Mammary epithelial cell (primary cell): ENCODE measurements at regions of chr3 and their contacts with region 1.

Region 1: GRCh38 chr3:65439641-65440284 is 599.0 kb downstream of the MAGI1 start:
- DNase-seq: peak; percentile 39
- H3K4me3 ChIP-seq: no peak overlapping the region
- H3K27ac ChIP-seq: no peak overlapping the region
- H3K4me1 ChIP-seq: no peaks in the 10 kb centered on the region
- H3K27me3 ChIP-seq: no peaks in the 10 kb centered on the region
- CTCF ChIP-seq: peak; percentile 46 to 76

Region 2: GRCh38 chr3:65342084-65342683 is 97.6 kb before region 1 on chr3:
- CTCF ChIA-PET with region 1: no interaction called
- dilution Hi-C with region 1: no loop called
- in situ Hi-C with region 1: no loop called
- intact Hi-C with region 1: loop called (anchors 1 kb)
- DNase-seq: peak; percentile 13
- H3K4me3 ChIP-seq: no peak overlapping the region
- H3K27ac ChIP-seq: no peak overlapping the region
- H3K4me1 ChIP-seq: no peaks in the 10 kb centered on the region
- H3K27me3 ChIP-seq: no peaks in the 10 kb centered on the region
- CTCF ChIP-seq: peak; percentile 76 to 81

Region 3: DNA sequence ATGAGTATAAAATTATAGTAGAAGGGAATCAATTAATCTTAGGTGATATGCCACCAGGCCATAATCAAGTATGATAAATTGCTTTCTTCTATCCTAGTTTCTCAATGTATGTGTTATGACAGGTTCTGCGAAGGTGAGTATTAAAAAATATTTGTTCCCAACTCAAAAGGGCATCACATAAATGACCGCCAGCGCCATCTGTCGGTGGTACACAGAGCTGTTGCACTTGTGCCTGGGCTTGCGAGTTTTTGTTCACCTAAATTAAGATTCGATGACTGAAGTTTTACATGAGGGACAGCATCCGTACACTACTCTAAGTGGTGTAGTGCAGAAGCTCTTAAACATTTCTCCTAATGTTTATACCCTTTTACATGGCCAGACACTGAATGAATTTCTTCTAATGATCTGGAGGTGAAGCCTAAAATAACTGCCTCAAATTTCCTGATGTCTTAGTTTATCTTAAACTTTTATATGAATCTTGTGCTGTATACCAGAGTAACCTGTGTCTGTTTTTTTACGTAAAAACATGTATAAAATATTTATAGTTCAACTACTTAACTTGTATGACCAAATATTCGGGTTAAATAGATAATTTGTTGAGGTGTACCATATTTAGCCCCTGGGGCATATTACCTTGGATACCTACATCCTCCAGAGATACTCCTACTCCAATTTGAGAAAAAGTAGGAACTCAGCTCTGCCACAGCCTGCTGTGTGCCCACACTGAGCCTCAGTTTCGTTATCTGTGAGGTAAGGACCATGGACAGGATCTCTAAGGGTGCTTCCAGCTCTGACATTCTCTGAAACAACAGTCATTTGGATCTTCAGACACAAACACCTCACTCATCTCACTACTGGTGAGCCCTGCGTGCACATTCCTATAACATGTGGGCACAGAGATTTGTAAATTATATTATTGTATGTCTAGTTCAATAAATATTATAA is 233.4 kb after region 1 on chr3:
- CTCF ChIA-PET with region 1: interaction called, 18 read pairs
- dilution Hi-C with region 1: no loop called
- in situ Hi-C with region 1: loop called in 1 of 2 experiments (anchors 25 kb)
- intact Hi-C with region 1: loop called (anchors 1 kb)
- DNase-seq: peak; percentile 30
- H3K4me3 ChIP-seq: no peak overlapping the region
- H3K27ac ChIP-seq: no peak overlapping the region
- H3K4me1 ChIP-seq: peaks cover 6% of the 10 kb centered on the region
- H3K27me3 ChIP-seq: no peaks in the 10 kb centered on the region
- CTCF ChIP-seq: peak; percentile 83 to 84

Region 4: DNA sequence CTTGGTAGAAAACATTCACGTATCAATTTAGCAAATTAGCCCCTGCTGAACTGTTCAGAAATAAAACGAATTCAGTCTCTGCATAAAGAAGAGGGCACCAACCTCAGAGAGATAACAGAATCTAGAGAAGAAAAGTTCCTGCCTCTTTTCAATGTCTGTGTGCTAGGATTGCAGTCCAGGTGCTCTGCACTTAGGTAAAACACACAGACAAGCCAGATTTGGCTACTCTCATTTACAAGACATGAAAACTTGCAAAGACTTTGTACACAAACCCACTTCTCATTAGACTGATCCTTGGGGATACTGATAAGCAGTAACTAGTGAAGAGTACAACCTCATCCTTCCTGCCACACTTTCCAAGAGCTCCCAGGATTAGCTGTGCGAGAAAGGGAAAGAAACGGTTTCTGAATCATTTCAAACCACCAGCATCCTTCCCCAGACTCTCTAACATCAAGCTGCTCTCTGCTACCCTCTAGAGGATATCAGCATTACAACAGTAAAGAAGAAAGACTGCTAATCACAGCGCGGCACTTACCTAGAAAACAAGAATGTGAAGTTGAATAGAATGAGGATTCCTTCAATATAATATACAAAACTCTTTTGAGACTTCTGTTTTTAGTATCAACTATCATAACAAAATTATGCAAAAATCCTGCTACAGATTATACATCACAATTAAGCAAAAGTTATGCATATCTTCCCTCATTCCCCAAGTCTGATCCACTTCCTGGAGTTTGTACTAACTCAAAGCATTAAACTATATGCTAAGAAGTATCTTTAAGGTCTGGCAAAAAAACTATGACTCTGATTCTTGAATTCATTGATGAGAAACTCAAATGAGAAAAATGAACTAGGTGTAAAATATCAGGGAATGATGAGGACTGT is 292.5 kb after region 1 on chr3:
- CTCF ChIA-PET with region 1: interaction called, 8 read pairs
- dilution Hi-C with region 1: no loop called
- in situ Hi-C with region 1: loop called (anchors 5 to 25 kb)
- intact Hi-C with region 1: loop called (anchors 1 kb)
- DNase-seq: peak; percentile 52
- H3K4me3 ChIP-seq: no peak overlapping the region
- H3K27ac ChIP-seq: no peak overlapping the region
- H3K4me1 ChIP-seq: no peaks in the 10 kb centered on the region
- H3K27me3 ChIP-seq: no peaks in the 10 kb centered on the region
- CTCF ChIP-seq: peak; percentile 82 to 88

Region 5: GRCh38 chr3:65751123-65751700 is 311.4 kb after region 1 on chr3:
- CTCF ChIA-PET with region 1: interaction called, 5 read pairs
- dilution Hi-C with region 1: no loop called
- in situ Hi-C with region 1: loop called in 1 of 2 experiments (anchors 25 kb)
- intact Hi-C with region 1: loop called (anchors 1 kb)
- DNase-seq: peak; percentile 11
- H3K4me3 ChIP-seq: no peak overlapping the region
- H3K27ac ChIP-seq: no peak overlapping the region
- H3K4me1 ChIP-seq: no peaks in the 10 kb centered on the region
- H3K27me3 ChIP-seq: no peaks in the 10 kb centered on the region
- CTCF ChIP-seq: peak; percentile 73 to 76

Region 6: GRCh38 chr3:65914740-65915367 is 475.1 kb after region 1 on chr3:
- CTCF ChIA-PET with region 1: no interaction called
- dilution Hi-C with region 1: no loop called
- in situ Hi-C with region 1: no loop called
- intact Hi-C with region 1: loop called (anchors 10 kb)
- DNase-seq: no peak
- H3K4me3 ChIP-seq: no peak overlapping the region
- H3K27ac ChIP-seq: no peak overlapping the region
- H3K4me1 ChIP-seq: no peaks in the 10 kb centered on the region
- H3K27me3 ChIP-seq: no peaks in the 10 kb centered on the region
- CTCF ChIP-seq: peak; percentile 15 to 26

Region 7: DNA sequence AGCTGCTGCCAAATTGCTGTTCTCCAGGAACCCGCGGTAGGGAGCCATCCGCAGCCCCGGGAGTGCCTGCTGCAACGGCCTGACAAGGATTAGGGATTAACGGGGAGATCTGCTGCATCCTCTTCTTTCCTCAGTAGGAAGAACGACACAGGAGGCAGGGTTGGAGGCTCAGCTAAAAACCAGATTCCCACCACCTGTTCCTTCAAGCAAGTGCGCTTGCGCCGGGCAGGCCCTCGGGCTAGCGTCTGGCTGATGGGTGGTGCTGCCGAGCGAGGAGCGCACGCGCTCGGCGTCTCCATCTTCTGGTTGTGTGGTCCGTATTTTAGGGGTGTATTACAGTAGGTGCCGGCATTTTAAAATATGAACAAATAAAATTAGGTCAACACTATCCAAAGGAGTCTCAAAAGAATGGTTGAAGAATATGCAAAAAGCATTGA is 755.6 kb after region 1 on chr3:
- CTCF ChIA-PET with region 1: no interaction called
- dilution Hi-C with region 1: no loop called
- in situ Hi-C with region 1: no loop called
- intact Hi-C with region 1: loop called (anchors 10 kb)
- DNase-seq: peak; percentile 39
- H3K4me3 ChIP-seq: no peak overlapping the region
- H3K27ac ChIP-seq: no peak overlapping the region
- H3K4me1 ChIP-seq: no peaks in the 10 kb centered on the region
- H3K27me3 ChIP-seq: no peaks in the 10 kb centered on the region
- CTCF ChIP-seq: no peak